Naive thymus-derived CD4-positive, alpha-beta T cell (primary cell): ENCODE measurements at regions of chr12 and their contacts with region 1.

Region 1: DNA sequence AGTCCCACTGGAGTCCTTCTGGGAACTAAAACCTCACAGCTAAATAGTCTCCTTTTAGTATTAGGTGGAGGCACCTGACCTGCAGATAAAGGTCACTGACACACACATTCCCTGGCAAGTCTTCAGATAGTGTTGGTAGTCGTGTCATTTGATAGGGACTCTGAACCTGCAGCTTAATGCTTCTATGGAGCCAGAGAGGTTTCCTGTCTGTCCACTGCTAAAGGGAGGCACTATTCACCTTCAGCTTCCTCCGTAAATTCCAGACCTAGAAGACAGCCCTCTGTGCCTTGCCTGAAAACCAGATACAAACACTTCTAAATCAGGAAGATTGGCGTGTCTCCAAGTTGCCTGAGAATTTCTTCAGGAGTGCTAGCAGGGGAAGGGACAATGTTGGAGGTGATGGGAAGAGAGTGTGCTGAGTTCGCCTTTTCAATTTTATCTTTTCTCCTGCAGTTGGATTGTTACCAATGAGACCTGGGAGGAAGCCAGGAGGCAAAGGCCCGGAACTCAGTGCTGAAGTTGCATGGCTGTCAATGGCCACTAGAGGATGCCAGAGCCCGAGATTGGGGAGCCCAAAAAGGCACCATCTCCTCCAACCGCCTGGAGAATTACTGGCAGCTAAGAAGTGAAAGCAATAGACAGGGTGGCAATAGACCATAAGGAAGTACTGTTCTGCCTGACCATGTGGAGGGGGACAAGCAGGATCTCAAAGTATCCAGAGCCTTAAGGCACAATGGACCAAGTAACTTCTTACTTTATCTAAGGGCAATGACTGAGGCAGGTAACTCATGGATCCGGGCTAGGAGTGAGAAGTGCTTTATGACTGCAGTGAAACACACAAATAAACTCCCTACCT is 81.6 kb upstream of the SCAF11 start:
- DNase-seq: peak; percentile 25 to 62 (median 51)
- ATAC-seq: peak; percentile 91
- H3K4me3 ChIP-seq: no peak overlapping the region
- H3K4me3 Mint-ChIP-seq: peak overlapping the region in 3 of 10 donors; percentile 12 to 49 (median 16)
- H3K27ac ChIP-seq: no peak overlapping the region
- H3K27ac Mint-ChIP-seq: peak overlapping the region in 2 of 9 donors; percentile 20 to 63
- H3K4me1 ChIP-seq: no peaks in the 10 kb centered on the region
- H3K4me1 Mint-ChIP-seq: peaks cover 0 to 14% (median 5%) of the 10 kb centered on the region in 7 donors
- H3K27me3 ChIP-seq: no peaks in the 10 kb centered on the region
- H3K27me3 Mint-ChIP-seq: peaks cover 0 to 15% (median 4%) of the 10 kb centered on the region in 5 donors

Region 2: GRCh38 chr12:46259713-46260112 is 187.7 kb after region 1 on chr12:
- CTCF ChIA-PET with region 1: no interaction called
- POLR2A ChIA-PET with region 1: no interaction called
- intact Hi-C with region 1: no loop called
- DNase-seq: no peak
- ATAC-seq: no peak
- H3K4me3 ChIP-seq: no peak overlapping the region
- H3K4me3 Mint-ChIP-seq: no peak overlapping the region
- H3K27ac ChIP-seq: no peak overlapping the region
- H3K27ac Mint-ChIP-seq: no peak overlapping the region
- H3K4me1 ChIP-seq: peaks cover 74 to 79% of the 10 kb centered on the region in 2 donors
- H3K4me1 Mint-ChIP-seq: peaks cover 0 to 43% (median 40%) of the 10 kb centered on the region in 7 donors
- H3K27me3 ChIP-seq: no peaks in the 10 kb centered on the region
- H3K27me3 Mint-ChIP-seq: no peaks in the 10 kb centered on the region

Region 3: GRCh38 chr12:46303039-46303666 is 231.2 kb after region 1 on chr12:
- CTCF ChIA-PET with region 1: no interaction called
- POLR2A ChIA-PET with region 1: no interaction called
- intact Hi-C with region 1: loop called in 1 of 2 experiments (anchors 1 kb)
- DNase-seq: peak in 7 of 9 donors; percentile 40 to 66 (median 57)
- ATAC-seq: peak; percentile 91
- H3K4me3 ChIP-seq: no peak overlapping the region
- H3K4me3 Mint-ChIP-seq: no peak overlapping the region
- H3K27ac ChIP-seq: no peak overlapping the region
- H3K27ac Mint-ChIP-seq: peak overlapping the region in 2 of 9 donors; percentile 1 to 7
- H3K4me1 ChIP-seq: no peaks in the 10 kb centered on the region
- H3K4me1 Mint-ChIP-seq: peaks cover 5 to 20% (median 15%) of the 10 kb centered on the region in 7 donors
- H3K27me3 ChIP-seq: no peaks in the 10 kb centered on the region
- H3K27me3 Mint-ChIP-seq: peaks cover 0 to 22% (median 0%) of the 10 kb centered on the region in 5 donors

Region 4: GRCh38 chr12:46933947-46934346 is 862.0 kb after region 1 on chr12:
- CTCF ChIA-PET with region 1: no interaction called
- POLR2A ChIA-PET with region 1: no interaction called
- intact Hi-C with region 1: loop called in 1 of 2 experiments (anchors 1 kb)
- DNase-seq: peak in 3 of 9 donors; percentile 2 to 17 (median 15)
- ATAC-seq: no peak
- H3K4me3 ChIP-seq: no peak overlapping the region
- H3K4me3 Mint-ChIP-seq: no peak overlapping the region
- H3K27ac ChIP-seq: no peak overlapping the region
- H3K27ac Mint-ChIP-seq: no peak overlapping the region
- H3K4me1 ChIP-seq: no peaks in the 10 kb centered on the region
- H3K4me1 Mint-ChIP-seq: peaks cover 0 to 6% (median 0%) of the 10 kb centered on the region in 7 donors
- H3K27me3 ChIP-seq: no peaks in the 10 kb centered on the region
- H3K27me3 Mint-ChIP-seq: peaks cover 5 to 32% (median 16%) of the 10 kb centered on the region in 5 donors

Region 5: GRCh38 chr12:46983393-46984266 is 911.6 kb after region 1 on chr12:
- CTCF ChIA-PET with region 1: no interaction called
- POLR2A ChIA-PET with region 1: no interaction called
- intact Hi-C with region 1: loop called (anchors 1 to 5 kb)
- DNase-seq: peak in 6 of 9 donors; percentile 5 to 54 (median 31)
- ATAC-seq: peak; percentile 74
- H3K4me3 ChIP-seq: no peak overlapping the region
- H3K4me3 Mint-ChIP-seq: peak overlapping the region in 1 of 10 donors; percentile 13
- H3K27ac ChIP-seq: no peak overlapping the region
- H3K27ac Mint-ChIP-seq: peak overlapping the region in 1 of 9 donors; percentile 6
- H3K4me1 ChIP-seq: peaks cover 3 to 8% of the 10 kb centered on the region in 2 donors
- H3K4me1 Mint-ChIP-seq: peaks cover 0 to 10% (median 9%) of the 10 kb centered on the region in 7 donors
- H3K27me3 ChIP-seq: no peaks in the 10 kb centered on the region
- H3K27me3 Mint-ChIP-seq: peaks cover 17 to 29% (median 26%) of the 10 kb centered on the region in 5 donors